ENCODE measurements at regions of chr19 and their contacts with region 1.

Region 1: GRCh38 chr19:18203863-18204393 is at the start of gene RAB3A:
- H3K4me3 Mint-ChIP-seq: peak within 1 kb of the TSS; percentile 93
- H3K27ac Mint-ChIP-seq: peak within 1 kb of the TSS; percentile 94
- H3K4me1 Mint-ChIP-seq: peaks cover 34% of the 10 kb centered on the region
- H3K27me3 Mint-ChIP-seq: peaks cover 23% of the 10 kb centered on the region

Region 2: DNA sequence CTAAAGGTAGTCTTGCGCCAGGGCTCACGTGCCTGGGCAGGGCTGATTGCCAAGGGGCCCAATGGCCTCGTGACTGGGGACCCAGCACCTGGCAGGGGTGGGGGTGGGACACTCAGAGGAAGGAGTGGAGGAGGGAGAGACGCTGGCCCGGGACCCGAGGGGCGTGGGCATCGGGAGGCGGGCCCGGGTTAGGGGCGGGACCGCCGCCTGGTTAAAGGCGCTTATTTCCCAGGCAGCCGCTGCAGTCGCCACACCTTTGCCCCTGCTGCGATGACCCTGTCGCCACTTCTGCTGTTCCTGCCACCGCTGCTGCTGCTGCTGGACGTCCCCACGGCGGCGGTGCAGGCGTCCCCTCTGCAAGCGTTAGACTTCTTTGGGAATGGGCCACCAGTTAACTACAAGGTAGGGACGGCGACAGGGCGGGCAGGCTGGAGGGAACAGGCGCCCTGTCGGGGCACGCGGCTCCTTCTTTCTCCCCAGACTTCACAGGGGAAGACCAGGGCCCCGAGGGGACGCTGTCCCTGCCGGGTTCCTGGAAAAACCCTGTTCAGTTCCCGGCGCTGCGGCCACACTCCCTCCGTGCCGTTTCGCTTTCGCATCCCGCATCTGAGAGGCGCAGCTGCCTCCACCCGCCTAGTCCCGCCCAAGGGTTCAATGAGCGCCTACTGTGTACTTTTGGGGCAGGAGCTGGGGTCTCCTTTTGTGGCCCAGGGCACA is 30.2 kb before region 1 on chr19 and contains the start of gene IFI30:
- intact Hi-C with region 1: loop called (anchors 1 kb)
- H3K4me3 Mint-ChIP-seq: peak within 1 kb of the TSS; percentile 96
- H3K27ac Mint-ChIP-seq: peak within 1 kb of the TSS; percentile 99
- H3K4me1 Mint-ChIP-seq: peaks cover 84% of the 10 kb centered on the region
- H3K27me3 Mint-ChIP-seq: no peaks in the 10 kb centered on the region

Region 3: DNA sequence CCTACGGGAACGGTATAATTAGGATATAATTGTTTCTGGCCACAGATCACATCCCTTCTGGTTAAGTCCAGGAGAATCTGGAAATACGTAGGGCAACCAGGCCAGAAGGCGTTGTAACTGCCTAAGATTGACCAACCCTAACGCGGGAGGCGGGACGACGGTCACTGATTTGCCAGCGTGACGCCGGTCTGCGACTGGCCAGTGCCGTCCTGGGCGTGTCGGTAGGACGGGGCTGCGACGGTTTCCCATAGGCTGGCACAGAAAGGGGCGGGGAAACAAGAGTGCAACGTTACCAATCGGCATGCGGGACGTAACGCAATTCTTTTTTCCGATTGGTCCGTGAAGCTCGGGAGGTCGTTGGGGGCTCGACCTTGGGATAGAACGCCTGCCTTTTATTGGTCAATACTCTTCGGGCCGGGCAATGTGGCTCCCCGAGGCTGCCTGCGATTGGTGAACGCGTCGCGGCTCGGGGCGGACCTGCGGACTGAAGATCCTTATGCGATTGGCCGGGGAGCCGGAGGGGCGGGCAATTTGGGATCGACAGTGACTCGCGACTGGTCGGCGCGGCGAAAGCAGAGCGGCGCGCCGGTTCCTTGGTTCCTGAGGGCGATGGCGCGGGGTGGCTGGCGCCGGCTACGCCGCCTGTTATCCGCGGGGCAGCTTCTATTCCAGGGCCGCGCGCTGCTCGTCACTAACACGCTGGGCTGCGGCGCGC is 11.1 kb before region 1 on chr19 and contains the start of gene MPV17L2:
- intact Hi-C with region 1: loop called (anchors 1 kb)
- H3K4me3 Mint-ChIP-seq: peak within 1 kb of the TSS; percentile 86
- H3K27ac Mint-ChIP-seq: peak within 1 kb of the TSS; percentile 92
- H3K4me1 Mint-ChIP-seq: peaks cover 17% of the 10 kb centered on the region
- H3K27me3 Mint-ChIP-seq: no peaks in the 10 kb centered on the region

Region 4: GRCh38 chr19:18251587-18252369 is 47.9 kb after region 1 on chr19:
- intact Hi-C with region 1: loop called (anchors 1 kb)
- H3K4me3 Mint-ChIP-seq: no peak overlapping the region
- H3K27ac Mint-ChIP-seq: peak overlapping the region; percentile 51
- H3K4me1 Mint-ChIP-seq: peaks cover 35% of the 10 kb centered on the region
- H3K27me3 Mint-ChIP-seq: peaks cover 47% of the 10 kb centered on the region

Region 5: DNA sequence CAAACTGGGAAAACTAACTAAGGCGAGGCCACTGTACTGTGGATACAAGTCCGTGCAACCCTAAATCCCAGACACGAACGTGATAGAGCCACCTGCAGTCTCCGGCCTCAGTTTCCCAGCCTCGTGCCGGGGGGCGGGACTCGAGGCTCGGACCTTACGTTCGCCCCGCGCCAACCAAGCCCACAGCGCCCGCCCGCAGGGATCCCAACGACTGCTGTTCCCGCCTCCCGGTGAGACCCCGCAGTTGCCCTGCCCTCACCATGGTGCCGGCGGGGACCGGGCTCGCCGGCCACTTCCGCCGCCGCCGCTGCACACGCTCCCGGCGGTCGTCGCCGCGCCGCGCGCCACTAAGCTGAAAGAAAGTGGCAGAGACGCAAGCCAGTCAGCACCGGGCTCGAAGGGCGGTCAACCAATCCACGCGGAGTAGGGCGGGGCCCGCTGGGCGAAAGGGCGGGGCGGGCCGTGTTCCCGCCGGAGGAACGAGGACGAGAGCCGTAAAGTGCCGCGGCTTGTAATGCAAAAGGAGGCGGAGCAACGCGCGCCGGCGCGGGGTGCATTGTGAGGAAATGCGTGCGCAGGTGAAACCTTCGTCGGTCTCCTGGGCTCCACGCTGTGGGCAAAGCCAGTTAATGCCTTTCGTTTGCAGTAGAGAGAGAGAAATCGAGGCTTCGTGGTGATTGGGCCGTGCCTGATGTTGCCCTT is 119.0 kb after region 1 on chr19 and contains the start of gene LSM4:
- intact Hi-C with region 1: loop called (anchors 10 kb)
- H3K4me3 Mint-ChIP-seq: peak within 1 kb of the TSS; percentile 86
- H3K27ac Mint-ChIP-seq: peak within 1 kb of the TSS; percentile 96
- H3K4me1 Mint-ChIP-seq: peaks cover 60% of the 10 kb centered on the region
- H3K27me3 Mint-ChIP-seq: no peaks in the 10 kb centered on the region

Region 6: DNA sequence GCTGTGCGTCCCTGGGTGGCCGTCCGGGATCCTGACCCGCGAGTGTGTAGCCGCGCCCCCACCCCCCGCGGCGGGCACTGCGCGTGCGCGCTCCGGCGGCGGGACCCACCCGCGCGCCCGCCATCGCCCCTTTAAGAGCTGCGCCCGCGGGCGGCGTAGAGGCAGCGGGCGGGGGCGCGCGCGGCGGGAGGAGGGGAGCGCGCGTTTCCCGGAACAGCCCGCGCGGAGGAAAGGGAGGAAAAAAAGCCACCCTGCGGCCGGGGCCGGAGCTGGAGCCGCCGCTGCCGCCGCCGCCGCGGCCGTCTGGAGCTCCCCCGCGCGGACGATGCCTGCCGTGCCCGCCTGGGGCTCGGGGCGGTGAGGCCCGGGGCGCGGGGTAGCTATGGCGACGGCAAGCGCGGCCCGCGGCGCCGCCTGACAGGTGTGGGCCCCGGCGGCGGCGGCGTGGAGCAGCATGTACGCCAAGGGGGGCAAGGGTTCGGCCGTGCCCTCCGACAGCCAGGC is 215.3 kb after region 1 on chr19 and contains the start of gene SSBP4:
- intact Hi-C with region 1: loop called (anchors 5 kb)
- H3K4me3 Mint-ChIP-seq: peak within 1 kb of the TSS; percentile 83
- H3K27ac Mint-ChIP-seq: peak within 1 kb of the TSS; percentile 95
- H3K4me1 Mint-ChIP-seq: peaks cover 88% of the 10 kb centered on the region
- H3K27me3 Mint-ChIP-seq: no peaks in the 10 kb centered on the region

Measured in dendritic cell treated with granulocyte-macrophage colony-stimulating factor and Interleukin-4, amounts not matched to agents 40 ng/mL and 50 ng/mL, for 4 days (primary cell).